ENCODE measurements at regions of chr13 and their contacts with region 1.

Region 1: GRCh38 chr13:52450012-52450792 is at the start of gene VPS36:
- DNase-seq: peak; percentile 99
- H3K4me3 Mint-ChIP-seq: peak within 1 kb of the TSS; percentile 93
- H3K27ac Mint-ChIP-seq: peak within 1 kb of the TSS; percentile 92
- H3K4me1 Mint-ChIP-seq: peaks cover 33% of the 10 kb centered on the region
- H3K27me3 Mint-ChIP-seq: no peaks in the 10 kb centered on the region
- total RNA-seq, gene VPS36: 42.0 and 43.0 TPM in 2 replicates

Region 2: DNA sequence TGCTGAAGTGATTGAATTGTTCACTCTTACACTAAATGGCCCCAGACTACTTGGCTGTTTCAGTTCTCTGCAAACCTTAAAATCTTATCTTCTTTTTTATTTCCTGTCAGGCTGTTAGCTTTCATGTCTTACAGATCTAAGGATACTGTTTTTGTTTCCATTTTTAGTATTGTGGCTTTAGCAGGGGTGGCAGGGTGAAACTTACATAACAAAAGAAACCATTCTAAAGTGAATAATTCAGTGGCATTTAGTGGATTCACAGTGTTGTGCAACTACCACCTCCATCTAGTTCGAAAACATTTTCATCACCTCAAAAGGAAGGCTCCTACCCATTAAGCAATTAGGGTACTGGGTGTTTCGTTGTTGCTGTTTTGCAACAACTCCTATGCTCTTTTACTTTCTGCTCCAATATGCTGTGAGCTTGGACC is 625.0 kb before region 1 on chr13:
- intact Hi-C with region 1: loop called (anchors 10 kb)
- DNase-seq: peak; percentile 79
- H3K4me3 Mint-ChIP-seq: peak overlapping the region; percentile 73
- H3K27ac Mint-ChIP-seq: peak overlapping the region; percentile 84
- H3K4me1 Mint-ChIP-seq: peaks cover 64% of the 10 kb centered on the region
- H3K27me3 Mint-ChIP-seq: peaks cover 3% of the 10 kb centered on the region

Region 3: DNA sequence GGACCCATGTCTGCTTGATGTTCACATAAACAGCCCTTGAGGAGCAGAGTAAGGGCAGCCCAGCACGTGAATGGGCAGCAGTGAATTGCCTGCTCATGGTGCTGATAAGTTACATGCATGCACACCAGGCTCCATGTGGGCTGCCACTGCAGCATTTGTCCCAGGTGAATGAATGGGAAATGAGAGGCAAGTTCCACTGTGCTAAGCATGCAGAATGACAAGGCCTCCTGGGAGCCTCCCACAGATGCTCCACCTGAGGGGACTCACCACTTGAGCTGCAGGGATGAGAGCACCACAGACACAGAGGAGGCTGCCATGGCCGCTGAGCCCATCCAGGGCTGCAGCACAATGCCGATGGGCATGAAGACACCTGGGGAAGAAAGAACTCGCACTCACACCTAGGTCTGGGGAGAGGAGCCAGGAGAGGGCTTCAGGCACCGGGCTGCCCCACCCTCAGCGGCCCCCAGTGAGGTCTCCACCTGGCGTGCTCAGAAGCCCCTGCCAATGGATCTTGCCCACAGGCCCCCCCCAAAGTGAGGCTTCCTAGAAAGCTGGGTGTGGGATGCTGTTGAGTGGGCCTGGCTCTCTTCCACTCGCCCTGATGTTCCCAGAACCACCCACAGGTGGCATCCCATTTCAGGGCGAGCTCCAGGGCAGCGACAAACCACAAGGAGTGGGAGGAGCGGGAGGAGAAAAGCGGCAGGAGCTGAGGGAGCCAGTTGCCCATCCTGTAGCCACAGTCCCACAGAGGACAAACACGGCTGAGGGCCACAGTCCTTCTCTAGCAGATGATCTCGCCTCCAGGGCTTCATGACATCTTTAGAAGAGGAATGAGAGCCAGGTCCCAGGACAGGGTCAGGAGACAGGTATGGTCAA is 514.6 kb before region 1 on chr13:
- intact Hi-C with region 1: no loop called
- DNase-seq: no peak
- H3K4me3 Mint-ChIP-seq: no peak overlapping the region
- H3K27ac Mint-ChIP-seq: no peak overlapping the region
- H3K4me1 Mint-ChIP-seq: no peaks in the 10 kb centered on the region
- H3K27me3 Mint-ChIP-seq: peaks cover 3% of the 10 kb centered on the region

Region 4: DNA sequence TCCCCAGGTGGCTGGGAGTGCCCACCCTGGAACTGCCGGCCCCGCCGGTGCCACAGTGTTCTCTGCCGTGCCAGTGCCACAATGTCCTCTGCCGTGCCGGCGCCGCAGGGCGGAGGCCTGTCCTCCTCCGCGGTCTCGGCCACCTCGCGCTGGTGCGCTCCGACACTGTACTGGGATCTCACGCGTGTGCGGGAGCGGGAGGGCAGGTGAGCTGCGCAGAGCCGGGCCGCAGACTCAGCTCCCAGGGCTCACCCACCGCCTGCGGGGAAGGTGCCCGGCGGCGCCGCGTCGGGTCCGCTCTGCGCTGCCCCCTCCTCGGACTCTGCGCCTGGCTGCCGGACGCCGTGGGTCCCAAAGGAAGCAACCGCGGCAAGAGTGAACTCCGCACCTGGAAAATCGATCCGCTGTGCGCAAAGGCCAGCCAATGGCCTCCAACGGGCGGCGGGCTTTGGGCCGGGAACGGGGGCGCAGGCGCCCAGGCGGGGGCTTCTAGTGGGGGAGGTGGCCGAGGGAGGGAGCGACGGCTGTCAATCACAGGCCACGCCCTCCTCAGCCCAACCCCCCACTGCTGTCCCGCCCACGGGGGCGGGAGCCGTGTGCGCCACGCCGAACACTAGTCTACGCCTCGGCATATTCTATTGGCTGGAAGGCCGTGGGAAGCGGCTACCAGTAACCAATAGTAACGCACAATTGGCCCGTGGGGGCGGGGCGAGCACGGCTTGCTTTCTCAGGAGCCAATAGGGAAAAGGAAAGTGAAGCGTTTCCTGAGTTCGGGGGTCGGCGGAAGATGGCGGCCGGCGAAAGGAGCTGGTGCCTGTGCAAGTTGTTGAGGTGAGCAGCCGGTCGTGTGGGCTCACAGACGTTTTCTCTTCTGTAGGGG is 438.3 kb before region 1 on chr13 and contains the start of gene ALG11:
- intact Hi-C with region 1: loop called (anchors 1 kb)
- DNase-seq: peak; percentile 100
- H3K4me3 Mint-ChIP-seq: peak within 1 kb of the TSS; percentile 99
- H3K27ac Mint-ChIP-seq: peak within 1 kb of the TSS; percentile 93
- H3K4me1 Mint-ChIP-seq: peaks cover 8% of the 10 kb centered on the region
- H3K27me3 Mint-ChIP-seq: peaks cover 34% of the 10 kb centered on the region
- total RNA-seq, gene ALG11: 26.7 and 28.0 TPM in 2 replicates

Region 5: GRCh38 chr13:52128714-52129700 is 321.2 kb before region 1 on chr13 and contains the start of gene NEK5:
- intact Hi-C with region 1: no loop called
- DNase-seq: peak; percentile 90
- H3K4me3 Mint-ChIP-seq: peak within 1 kb of the TSS; percentile 89
- H3K27ac Mint-ChIP-seq: no peak within 1 kb of the TSS
- H3K4me1 Mint-ChIP-seq: peaks cover 22% of the 10 kb centered on the region
- H3K27me3 Mint-ChIP-seq: peaks cover 10% of the 10 kb centered on the region
- total RNA-seq, gene NEK5: not detected in 2 replicates

Region 6: GRCh38 chr13:52405767-52406494 is 44.3 kb before region 1 on chr13 and contains the start of gene THSD1:
- intact Hi-C with region 1: loop called (anchors 5 kb)
- DNase-seq: peak; percentile 67
- H3K4me3 Mint-ChIP-seq: peak within 1 kb of the TSS; percentile 77
- H3K27ac Mint-ChIP-seq: no peak within 1 kb of the TSS
- H3K4me1 Mint-ChIP-seq: peaks cover 14% of the 10 kb centered on the region
- H3K27me3 Mint-ChIP-seq: peaks cover 29% of the 10 kb centered on the region
- total RNA-seq, gene THSD1: 0.14 and 0.21 TPM in 2 replicates

Region 7: GRCh38 chr13:52638666-52639328 is 188.6 kb after region 1 on chr13:
- intact Hi-C with region 1: no loop called
- DNase-seq: no peak
- H3K4me3 Mint-ChIP-seq: no peak overlapping the region
- H3K27ac Mint-ChIP-seq: no peak overlapping the region
- H3K4me1 Mint-ChIP-seq: peaks cover 2% of the 10 kb centered on the region
- H3K27me3 Mint-ChIP-seq: no peaks in the 10 kb centered on the region

Region 8: DNA sequence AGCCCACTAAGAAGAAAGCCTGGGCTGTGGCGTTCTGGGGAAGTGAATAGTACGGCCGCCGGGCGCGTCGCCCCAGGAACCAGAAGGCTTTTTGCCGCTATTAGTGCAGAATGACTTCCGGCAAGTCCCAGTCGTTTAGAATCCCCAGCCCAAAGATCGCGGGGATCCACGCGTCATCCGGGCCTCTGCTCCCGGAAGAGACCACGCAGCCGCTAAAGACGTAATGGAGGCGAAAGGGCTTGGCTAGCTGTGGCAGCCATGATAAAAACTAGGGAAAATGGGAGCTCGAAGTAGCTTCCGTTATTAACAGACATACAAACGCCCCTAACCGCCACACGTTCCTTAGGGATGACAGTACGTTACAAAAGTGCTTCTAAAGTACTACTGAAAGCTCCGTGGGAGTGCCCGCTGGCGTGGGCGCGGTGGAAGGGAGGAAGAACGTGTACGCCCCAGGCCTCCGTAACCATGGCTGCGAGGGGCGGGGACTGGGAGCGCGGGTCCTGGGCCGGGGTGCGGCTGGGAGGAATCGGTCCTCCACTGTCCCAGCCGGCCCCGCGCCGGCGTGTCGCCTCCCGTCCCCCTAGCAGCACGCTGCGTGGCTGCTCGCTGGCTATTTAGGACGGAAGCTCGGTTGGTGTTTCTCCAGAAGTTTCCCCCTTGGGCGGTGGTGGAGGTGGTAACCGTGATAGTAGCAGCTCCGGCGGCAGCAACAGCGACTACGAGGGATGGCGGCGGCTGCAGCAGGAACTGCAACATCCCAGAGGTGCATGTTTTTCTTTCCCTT is 202.2 kb after region 1 on chr13 and contains the start of gene SUGT1:
- intact Hi-C with region 1: loop called (anchors 1 kb)
- DNase-seq: peak; percentile 98
- H3K4me3 Mint-ChIP-seq: no peak within 1 kb of the TSS
- H3K27ac Mint-ChIP-seq: no peak within 1 kb of the TSS
- H3K4me1 Mint-ChIP-seq: peaks cover 15% of the 10 kb centered on the region
- H3K27me3 Mint-ChIP-seq: no peaks in the 10 kb centered on the region
- total RNA-seq, gene SUGT1: 71.2 and 77.8 TPM in 2 replicates